Aorta (tissue), 5 donors: ENCODE measurements at regions of chr5 and their contacts with region 1.

Region 1: DNA sequence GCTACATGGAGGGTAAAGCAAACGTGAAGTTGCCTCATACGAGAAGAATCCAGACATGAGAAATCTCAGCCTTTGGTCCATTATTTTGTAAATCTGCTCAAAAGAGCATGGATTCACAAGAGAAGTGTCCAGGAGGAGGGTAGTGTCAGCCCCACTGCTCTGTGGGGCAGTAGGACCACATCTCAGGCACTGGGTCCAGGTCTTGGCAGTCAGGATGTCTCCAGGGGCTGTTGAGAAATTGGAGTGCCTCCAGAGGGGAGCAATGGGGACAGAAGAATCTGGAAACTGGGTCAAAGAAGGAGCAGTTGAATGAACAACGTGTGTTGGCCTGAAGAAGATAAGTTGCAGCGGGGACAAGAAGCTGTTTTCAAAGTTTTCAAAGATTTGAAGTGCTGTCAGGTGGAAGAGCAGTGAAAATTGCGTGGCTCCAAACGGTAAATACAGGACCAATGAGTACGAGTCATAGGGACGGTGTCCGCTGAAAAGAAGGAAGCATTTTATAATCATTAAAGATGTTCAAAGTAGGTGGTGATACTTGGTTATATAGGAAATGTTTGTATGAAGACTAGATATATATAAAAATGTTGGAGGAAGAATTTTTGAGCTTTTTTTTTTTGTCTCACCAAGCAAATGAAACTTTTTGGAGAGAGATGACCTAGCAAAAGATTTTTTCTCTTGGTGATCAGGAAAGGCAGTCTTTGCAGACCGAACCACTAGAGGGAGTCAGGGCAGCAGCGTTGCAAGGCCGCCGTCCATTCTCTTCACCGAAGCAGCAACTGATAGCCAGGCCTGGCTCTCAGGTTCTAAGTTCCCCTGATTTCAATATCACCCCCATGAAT is 57.1 kb upstream of the ZBED3 start:
- DNase-seq: peak; percentile 82 to 84
- ATAC-seq: peak; percentile 88
- H3K4me3 ChIP-seq: no peak overlapping the region
- H3K27ac ChIP-seq: no peak overlapping the region
- H3K4me1 ChIP-seq: no peaks in the 10 kb centered on the region
- H3K27me3 ChIP-seq: no peaks in the 10 kb centered on the region

Region 2: DNA sequence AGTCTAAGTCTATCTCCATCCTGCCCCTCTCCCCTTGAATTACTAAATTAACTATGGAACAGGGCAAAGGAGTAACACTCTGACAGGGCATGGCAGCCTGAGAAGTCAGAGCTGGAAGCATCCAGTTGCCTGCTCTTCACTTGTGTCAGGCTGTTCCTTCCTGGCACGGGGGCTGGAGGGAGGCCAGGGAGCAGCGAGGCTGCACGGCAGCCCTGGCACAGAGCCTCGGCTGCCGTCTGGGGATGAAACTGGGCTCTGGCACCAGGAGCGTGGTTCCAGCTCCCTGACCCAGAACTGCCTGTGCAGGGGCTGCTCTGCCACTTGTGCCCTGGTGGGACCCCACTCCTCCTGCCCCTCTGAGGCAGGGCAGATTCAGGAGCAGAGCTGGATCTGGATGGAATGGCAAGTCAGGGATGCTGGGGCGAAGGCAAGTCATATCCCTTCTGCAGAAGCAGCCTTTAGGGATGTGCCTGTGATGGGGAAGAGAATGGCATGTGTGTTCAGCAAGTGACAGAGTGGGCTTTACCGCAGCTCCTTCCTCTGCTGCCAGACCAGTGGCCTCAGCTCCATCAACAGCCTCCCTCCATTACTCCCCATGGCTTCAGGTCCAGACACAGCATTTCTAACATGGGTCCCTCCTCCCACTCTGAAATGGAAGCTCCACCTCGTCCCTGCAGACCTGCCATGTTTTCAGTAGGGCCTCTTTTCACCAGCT is 24.1 kb after region 1 on chr5:
- intact Hi-C with region 1: no loop called
- DNase-seq: peak; percentile 79 to 89
- ATAC-seq: peak; percentile 83
- H3K4me3 ChIP-seq: no peak overlapping the region
- H3K27ac ChIP-seq: no peak overlapping the region
- H3K4me1 ChIP-seq: peaks cover 0 to 5% of the 10 kb centered on the region in 2 donors
- H3K27me3 ChIP-seq: no peaks in the 10 kb centered on the region

Region 3: DNA sequence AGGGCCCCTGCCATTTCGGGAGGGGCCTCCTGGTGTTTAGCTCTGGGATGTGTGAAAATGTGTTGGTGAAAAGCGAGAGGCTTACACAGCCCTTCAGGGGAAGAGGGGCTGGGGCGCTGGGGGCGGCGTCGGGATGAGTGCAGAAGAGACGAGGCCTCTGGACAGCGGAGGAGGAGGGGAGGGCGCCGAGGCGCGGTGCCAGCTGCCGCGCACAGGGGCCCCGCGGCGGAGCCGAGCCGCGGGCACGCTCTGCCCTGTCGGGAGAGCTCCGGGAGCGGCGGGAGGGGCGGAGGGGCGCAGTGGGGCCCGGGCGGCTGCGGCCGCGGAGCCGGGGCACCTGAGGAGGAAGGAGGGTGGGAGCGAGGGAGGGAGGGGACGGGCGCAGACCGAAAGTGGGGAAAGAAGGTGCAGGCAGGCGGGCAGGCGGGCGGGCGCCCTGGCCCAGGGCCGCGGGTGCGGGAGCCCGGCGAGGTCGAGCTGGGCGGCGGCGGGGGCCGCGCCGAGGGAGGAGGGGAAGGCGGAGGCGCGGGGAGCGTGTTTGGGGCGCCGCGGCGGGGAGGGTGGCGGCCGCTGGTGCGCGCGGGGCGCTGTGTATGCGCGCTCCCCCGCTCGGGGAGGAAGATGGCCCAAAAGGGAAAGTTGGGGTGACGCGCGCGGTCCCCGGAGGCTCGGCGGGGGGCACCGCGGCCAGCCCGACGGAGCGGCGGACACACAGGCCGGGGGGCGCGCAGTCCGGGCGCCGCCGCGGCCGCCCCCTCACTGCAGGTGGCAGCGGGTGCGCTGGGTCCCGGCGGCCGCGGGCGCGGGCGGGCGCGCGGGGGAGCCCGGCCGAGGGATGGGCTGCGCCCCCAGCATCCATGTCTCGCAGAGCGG is 66.1 kb after region 1 on chr5 and contains the start of gene PDE8B:
- intact Hi-C with region 1: loop called in 1 of 2 experiments (anchors 10 kb)
- DNase-seq: peak in 1 of 2 donors; percentile 75
- ATAC-seq: peak; percentile 56
- H3K4me3 ChIP-seq: peak within 1 kb of the TSS; percentile 81 to 95
- H3K27ac ChIP-seq: peak within 1 kb of the TSS in 1 of 2 donors; percentile 52
- H3K4me1 ChIP-seq: no peaks in the 10 kb centered on the region
- H3K27me3 ChIP-seq: no peaks in the 10 kb centered on the region
- total RNA-seq, gene PDE8B: 25.5 to 42.6 TPM

Region 4: GRCh38 chr5:77437194-77437593 is 293.0 kb after region 1 on chr5:
- intact Hi-C with region 1: loop called (anchors 5 kb)
- DNase-seq: no peak
- ATAC-seq: no peak
- H3K4me3 ChIP-seq: no peak overlapping the region
- H3K27ac ChIP-seq: no peak overlapping the region
- H3K4me1 ChIP-seq: no peaks in the 10 kb centered on the region
- H3K27me3 ChIP-seq: no peaks in the 10 kb centered on the region